ENCODE measurements at regions of chr7 and their contacts with region 1.

Region 1: DNA sequence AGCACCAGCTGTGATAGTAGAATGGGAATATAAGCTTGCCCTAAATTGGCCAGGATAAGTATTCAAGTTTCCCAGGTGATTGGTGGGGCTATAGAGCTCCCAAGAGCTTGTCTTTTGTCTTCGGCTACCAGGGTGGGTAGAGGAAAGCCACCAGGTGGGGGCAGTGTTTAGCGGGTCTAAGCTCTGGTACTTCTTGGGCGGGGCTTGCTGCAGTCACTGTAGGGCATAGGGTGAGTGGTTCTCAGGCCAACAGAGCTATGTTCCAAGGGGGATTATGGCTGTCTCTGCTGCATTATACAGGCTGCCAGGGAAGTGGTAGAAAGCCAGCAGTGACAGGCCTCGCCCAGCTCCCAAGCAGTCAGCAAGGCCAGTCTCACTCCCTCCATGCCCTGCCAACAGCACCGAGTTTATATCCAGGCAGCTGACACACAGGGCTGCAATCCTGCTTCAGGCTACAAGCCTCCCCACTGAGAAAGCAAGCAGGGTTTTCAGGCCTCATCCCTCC is 110.7 kb downstream of the ZNF467 start:
- DNase-seq: peak; percentile 66
- H3K4me3 ChIP-seq: no peak overlapping the region
- H3K27ac ChIP-seq: no peak overlapping the region
- H3K4me1 ChIP-seq: no peaks in the 10 kb centered on the region
- H3K27me3 ChIP-seq: peaks cover 0 to 16% of the 10 kb centered on the region in 2 experiments
- CTCF ChIP-seq: peak; percentile 55 to 66
- POLR2A ChIP-seq: no peak

Region 2: DNA sequence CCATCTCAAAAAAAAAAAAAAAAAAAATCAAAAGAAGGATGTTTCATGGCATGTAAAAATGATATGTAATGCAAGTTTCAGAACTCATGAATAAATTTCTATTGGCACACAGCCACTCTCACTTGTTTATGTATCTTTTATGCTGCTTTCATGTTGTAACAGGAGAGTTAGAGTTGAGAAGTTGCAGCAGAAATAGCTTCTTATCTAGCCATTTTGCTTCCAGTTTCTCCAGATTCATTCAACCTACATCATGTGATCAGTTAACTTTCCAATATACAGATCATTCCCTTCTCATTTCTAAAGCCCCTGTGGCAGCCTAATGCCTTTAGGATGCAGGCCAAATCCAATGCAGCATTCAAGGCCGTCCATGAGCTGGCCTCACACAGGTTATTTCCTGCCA is 602.5 kb before region 1 on chr7:
- CTCF ChIA-PET with region 1: no interaction called
- POLR2A ChIA-PET with region 1: no interaction called
- dilution Hi-C with region 1: no loop called
- intact Hi-C with region 1: no loop called
- DNase-seq: no peak
- H3K4me3 ChIP-seq: no peak overlapping the region
- H3K27ac ChIP-seq: no peak overlapping the region
- H3K4me1 ChIP-seq: peaks cover 7% of the 10 kb centered on the region
- H3K27me3 ChIP-seq: no peaks in the 10 kb centered on the region
- CTCF ChIP-seq: no peak
- POLR2A ChIP-seq: no peak

Region 3: DNA sequence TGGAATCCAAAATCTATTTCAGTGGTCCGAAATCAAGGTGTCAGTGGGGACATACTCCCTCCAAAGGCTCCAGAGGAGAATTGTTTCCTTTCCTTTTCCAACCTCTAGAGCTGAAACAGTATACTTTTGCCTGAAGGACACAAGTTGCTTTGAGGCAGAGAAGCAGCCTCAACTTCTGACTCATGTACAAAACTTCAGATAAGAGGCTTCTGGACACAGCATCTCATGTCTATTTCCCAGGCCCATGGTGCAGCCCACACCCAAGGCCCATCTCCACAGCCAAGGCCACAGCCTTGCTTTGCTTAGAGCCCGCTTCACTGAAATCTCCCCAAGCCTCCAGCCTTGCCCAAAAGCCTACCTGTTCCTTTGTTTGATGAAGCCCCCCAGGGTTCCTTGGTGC is 41.9 kb after region 1 on chr7:
- CTCF ChIA-PET with region 1: interaction called, 10 read pairs
- POLR2A ChIA-PET with region 1: no interaction called
- dilution Hi-C with region 1: no loop called
- intact Hi-C with region 1: no loop called
- DNase-seq: no peak
- H3K4me3 ChIP-seq: no peak overlapping the region
- H3K27ac ChIP-seq: no peak overlapping the region
- H3K4me1 ChIP-seq: no peaks in the 10 kb centered on the region
- H3K27me3 ChIP-seq: no peaks in the 10 kb centered on the region
- CTCF ChIP-seq: no peak
- POLR2A ChIP-seq: no peak

Region 4: GRCh38 chr7:149742075-149742701 is 79.5 kb after region 1 on chr7:
- CTCF ChIA-PET with region 1: interaction called, 234 read pairs
- POLR2A ChIA-PET with region 1: no interaction called
- dilution Hi-C with region 1: no loop called
- intact Hi-C with region 1: loop called (anchors 1 kb)
- DNase-seq: peak; percentile 71
- H3K4me3 ChIP-seq: peak overlapping the region in 2 of 3 experiments; percentile 6 to 10
- H3K27ac ChIP-seq: no peak overlapping the region
- H3K4me1 ChIP-seq: no peaks in the 10 kb centered on the region
- H3K27me3 ChIP-seq: peaks cover 0 to 7% of the 10 kb centered on the region in 2 experiments
- CTCF ChIP-seq: peak; percentile 85 to 86
- POLR2A ChIP-seq: no peak

Region 5: GRCh38 chr7:149753401-149754233 is 91.0 kb after region 1 on chr7:
- CTCF ChIA-PET with region 1: interaction called, 34 read pairs
- POLR2A ChIA-PET with region 1: no interaction called
- dilution Hi-C with region 1: no loop called
- intact Hi-C with region 1: no loop called
- DNase-seq: peak; percentile 55
- H3K4me3 ChIP-seq: no peak overlapping the region
- H3K27ac ChIP-seq: no peak overlapping the region
- H3K4me1 ChIP-seq: no peaks in the 10 kb centered on the region
- H3K27me3 ChIP-seq: peaks cover 0 to 2% of the 10 kb centered on the region in 2 experiments
- CTCF ChIP-seq: peak; percentile 60 to 72
- POLR2A ChIP-seq: no peak

Region 6: GRCh38 chr7:149790146-149790548 is 127.5 kb after region 1 on chr7:
- CTCF ChIA-PET with region 1: interaction called, 41 read pairs
- POLR2A ChIA-PET with region 1: no interaction called
- dilution Hi-C with region 1: no loop called
- intact Hi-C with region 1: loop called (anchors 1 kb)
- DNase-seq: peak; percentile 41
- H3K4me3 ChIP-seq: no peak overlapping the region
- H3K27ac ChIP-seq: no peak overlapping the region
- H3K4me1 ChIP-seq: no peaks in the 10 kb centered on the region
- H3K27me3 ChIP-seq: peaks cover 4 to 10% of the 10 kb centered on the region in 2 experiments
- CTCF ChIP-seq: peak; percentile 60 to 84
- POLR2A ChIP-seq: no peak